Naive thymus-derived CD4-positive, alpha-beta T cell (primary cell): ENCODE measurements at regions of chr3 and their contacts with region 1.

Region 1: DNA sequence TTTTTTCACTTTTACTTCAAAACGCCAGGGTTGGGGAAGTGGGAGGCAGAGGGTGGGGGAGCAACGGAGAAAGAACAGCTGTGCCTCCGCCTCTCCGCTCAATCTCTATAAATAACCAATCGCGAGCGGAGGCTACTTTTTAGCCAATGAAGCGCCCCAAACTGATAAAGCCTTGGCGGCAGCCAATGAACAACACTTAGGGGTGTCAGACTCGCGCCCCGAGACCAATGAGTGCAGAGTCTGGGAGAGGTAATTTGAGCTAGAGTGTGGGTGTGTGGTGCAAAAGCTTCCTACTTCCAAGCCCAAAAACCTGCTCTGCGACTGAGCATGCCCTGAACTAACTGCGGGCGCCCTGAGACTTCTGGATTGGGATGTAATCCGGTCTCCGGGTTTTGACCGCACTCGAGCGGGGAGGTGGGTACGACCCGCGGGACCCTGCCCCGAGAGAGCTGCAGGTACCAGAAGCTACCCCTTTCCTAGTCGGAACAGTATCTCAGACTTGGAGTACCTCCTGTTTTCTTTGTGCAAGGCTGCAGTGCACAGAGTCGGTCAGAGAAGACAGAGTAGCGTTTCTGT is 800 bp upstream of the RAP2B start:
- DNase-seq: peak; percentile 66 to 95 (median 93)
- ATAC-seq: peak; percentile 85
- H3K4me3 ChIP-seq: peak overlapping the region; percentile 97
- H3K4me3 Mint-ChIP-seq: peak overlapping the region; percentile 95 to 100 (median 98)
- H3K27ac ChIP-seq: peak overlapping the region; percentile 81
- H3K27ac Mint-ChIP-seq: peak overlapping the region; percentile 89 to 98 (median 92)
- H3K4me1 ChIP-seq: peaks cover 7 to 22% of the 10 kb centered on the region in 2 donors
- H3K4me1 Mint-ChIP-seq: peaks cover 28 to 40% (median 34%) of the 10 kb centered on the region in 7 donors
- H3K27me3 ChIP-seq: no peaks in the 10 kb centered on the region
- H3K27me3 Mint-ChIP-seq: no peaks in the 10 kb centered on the region

Region 2: GRCh38 chr3:153090973-153091372 is 70.3 kb before region 1 on chr3:
- CTCF ChIA-PET with region 1: interaction called, 3 read pairs
- POLR2A ChIA-PET with region 1: no interaction called
- intact Hi-C with region 1: loop called (anchors 1 kb)
- DNase-seq: peak in 7 of 9 donors; percentile 11 to 73 (median 64)
- ATAC-seq: peak; percentile 70
- H3K4me3 ChIP-seq: no peak overlapping the region
- H3K4me3 Mint-ChIP-seq: peak overlapping the region; percentile 9 to 79 (median 51)
- H3K27ac ChIP-seq: no peak overlapping the region
- H3K27ac Mint-ChIP-seq: peak overlapping the region; percentile 40 to 91 (median 83)
- H3K4me1 ChIP-seq: peaks cover 5 to 15% of the 10 kb centered on the region in 2 donors
- H3K4me1 Mint-ChIP-seq: peaks cover 8 to 37% (median 26%) of the 10 kb centered on the region in 7 donors
- H3K27me3 ChIP-seq: no peaks in the 10 kb centered on the region
- H3K27me3 Mint-ChIP-seq: peaks cover 0 to 12% (median 0%) of the 10 kb centered on the region in 5 donors

Region 3: DNA sequence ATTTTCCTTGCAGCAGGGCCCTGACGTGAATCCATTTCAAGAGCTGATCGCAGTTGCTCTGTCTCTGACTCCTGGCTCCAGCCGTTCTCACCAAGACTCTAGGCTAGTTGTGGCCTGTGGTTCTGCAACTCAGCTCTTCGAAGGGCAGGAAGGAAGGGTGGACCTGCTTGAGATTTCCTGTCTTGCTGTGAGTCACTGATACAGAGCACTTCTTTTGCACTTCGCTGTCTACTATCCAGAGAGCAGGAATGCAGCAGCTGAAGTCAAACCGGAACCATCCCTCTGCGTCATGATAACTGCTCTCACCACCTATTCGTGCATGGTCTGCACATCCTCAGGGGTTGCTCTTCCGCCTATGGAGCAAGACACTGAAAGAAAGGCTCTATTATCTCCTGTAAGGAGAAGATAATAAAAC is 60.5 kb after region 1 on chr3:
- CTCF ChIA-PET with region 1: interaction called, 15 read pairs
- POLR2A ChIA-PET with region 1: interaction called, 55 read pairs
- intact Hi-C with region 1: loop called (anchors 1 kb)
- DNase-seq: peak; percentile 31 to 88 (median 82)
- ATAC-seq: peak; percentile 97
- H3K4me3 ChIP-seq: peak overlapping the region; percentile 39
- H3K4me3 Mint-ChIP-seq: peak overlapping the region; percentile 66 to 89 (median 84)
- H3K27ac ChIP-seq: peak overlapping the region; percentile 70
- H3K27ac Mint-ChIP-seq: peak overlapping the region in 8 of 9 donors; percentile 90 to 98 (median 96)
- H3K4me1 ChIP-seq: peaks cover 35 to 61% of the 10 kb centered on the region in 2 donors
- H3K4me1 Mint-ChIP-seq: peaks cover 6 to 73% (median 58%) of the 10 kb centered on the region in 7 donors
- H3K27me3 ChIP-seq: no peaks in the 10 kb centered on the region
- H3K27me3 Mint-ChIP-seq: no peaks in the 10 kb centered on the region

Region 4: DNA sequence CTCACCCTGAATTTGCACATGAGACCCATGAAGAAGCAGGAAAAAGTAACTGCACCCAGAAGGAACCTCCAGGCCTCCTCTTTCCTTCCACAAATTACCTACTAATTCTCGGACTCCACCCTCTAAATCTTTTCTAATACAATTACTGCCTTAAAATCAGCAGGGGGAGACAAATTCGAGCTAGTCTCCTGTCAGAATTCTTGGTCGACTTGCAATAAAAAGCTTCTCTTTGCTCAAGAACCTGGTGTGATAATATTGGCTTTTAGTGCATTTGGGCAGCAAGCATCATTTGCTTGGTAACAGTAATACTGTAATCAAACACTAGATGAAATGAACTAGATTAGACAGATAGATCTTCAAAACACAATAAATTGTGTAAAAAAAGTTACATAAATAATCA is 282.7 kb after region 1 on chr3:
- CTCF ChIA-PET with region 1: no interaction called
- POLR2A ChIA-PET with region 1: interaction called, 4 read pairs
- intact Hi-C with region 1: loop called in 1 of 2 experiments (anchors 1 kb)
- DNase-seq: peak in 5 of 9 donors; percentile 8 to 24 (median 12)
- ATAC-seq: no peak
- H3K4me3 ChIP-seq: no peak overlapping the region
- H3K4me3 Mint-ChIP-seq: no peak overlapping the region
- H3K27ac ChIP-seq: no peak overlapping the region
- H3K27ac Mint-ChIP-seq: peak overlapping the region in 1 of 9 donors; percentile 22
- H3K4me1 ChIP-seq: no peaks in the 10 kb centered on the region
- H3K4me1 Mint-ChIP-seq: peaks cover 5 to 26% (median 16%) of the 10 kb centered on the region in 7 donors
- H3K27me3 ChIP-seq: no peaks in the 10 kb centered on the region
- H3K27me3 Mint-ChIP-seq: no peaks in the 10 kb centered on the region

Region 5: DNA sequence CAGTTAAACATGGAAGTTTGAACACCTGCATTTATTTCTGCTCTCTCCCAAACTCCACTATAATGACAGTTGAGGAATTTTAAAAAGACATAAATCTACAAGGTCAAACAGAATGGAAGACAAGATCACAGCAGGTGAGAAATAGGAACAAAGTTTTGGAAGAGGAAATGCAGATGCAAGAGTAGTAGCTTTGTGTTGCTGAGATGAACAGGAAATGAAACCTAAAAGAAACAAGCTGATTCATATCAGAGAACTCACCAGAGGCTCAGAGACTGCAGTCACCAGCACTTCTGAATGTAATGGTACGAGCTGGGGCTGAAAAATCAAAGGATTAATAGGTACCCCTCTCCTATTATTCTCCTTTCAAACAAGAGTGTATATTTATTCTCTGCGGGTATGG is 460.7 kb after region 1 on chr3:
- CTCF ChIA-PET with region 1: interaction called, 4 read pairs
- POLR2A ChIA-PET with region 1: interaction called, 14 read pairs
- intact Hi-C with region 1: loop called (anchors 1 kb)
- DNase-seq: peak in 4 of 9 donors; percentile 17 to 35 (median 30)
- ATAC-seq: peak; percentile 64
- H3K4me3 ChIP-seq: peak overlapping the region; percentile 3
- H3K4me3 Mint-ChIP-seq: peak overlapping the region; percentile 33 to 83 (median 58)
- H3K27ac ChIP-seq: no peak overlapping the region
- H3K27ac Mint-ChIP-seq: peak overlapping the region; percentile 48 to 90 (median 78)
- H3K4me1 ChIP-seq: peaks cover 40% of the 10 kb centered on the region in 2 donors
- H3K4me1 Mint-ChIP-seq: peaks cover 21 to 63% (median 56%) of the 10 kb centered on the region in 7 donors
- H3K27me3 ChIP-seq: no peaks in the 10 kb centered on the region
- H3K27me3 Mint-ChIP-seq: no peaks in the 10 kb centered on the region

Region 6: GRCh38 chr3:153927107-153927506 is 765.9 kb after region 1 on chr3:
- CTCF ChIA-PET with region 1: no interaction called
- POLR2A ChIA-PET with region 1: no interaction called
- intact Hi-C with region 1: loop called in 1 of 2 experiments (anchors 10 kb)
- DNase-seq: no peak
- ATAC-seq: no peak
- H3K4me3 ChIP-seq: no peak overlapping the region
- H3K4me3 Mint-ChIP-seq: no peak overlapping the region
- H3K27ac ChIP-seq: no peak overlapping the region
- H3K27ac Mint-ChIP-seq: no peak overlapping the region
- H3K4me1 ChIP-seq: no peaks in the 10 kb centered on the region
- H3K4me1 Mint-ChIP-seq: no peaks in the 10 kb centered on the region
- H3K27me3 ChIP-seq: no peaks in the 10 kb centered on the region
- H3K27me3 Mint-ChIP-seq: peaks cover 0 to 21% (median 10%) of the 10 kb centered on the region in 5 donors

Region 7: GRCh38 chr3:154323891-154324738 is 1162.9 kb after region 1 on chr3 and contains the start of gene DHX36:
- CTCF ChIA-PET with region 1: no interaction called
- POLR2A ChIA-PET with region 1: no interaction called
- intact Hi-C with region 1: loop called (anchors 1 to 5 kb)
- DNase-seq: peak; percentile 73 to 92 (median 89)
- ATAC-seq: peak; percentile 94
- H3K4me3 ChIP-seq: peak within 1 kb of the TSS; percentile 70
- H3K4me3 Mint-ChIP-seq: peak within 1 kb of the TSS in 5 of 10 donors; percentile 92 to 96 (median 96)
- H3K27ac ChIP-seq: peak within 1 kb of the TSS; percentile 94
- H3K27ac Mint-ChIP-seq: peak within 1 kb of the TSS in 8 of 9 donors; percentile 96 to 100 (median 99)
- H3K4me1 ChIP-seq: peaks cover 38 to 43% of the 10 kb centered on the region in 2 donors
- H3K4me1 Mint-ChIP-seq: peaks cover 4 to 23% (median 20%) of the 10 kb centered on the region in 7 donors
- H3K27me3 ChIP-seq: no peaks in the 10 kb centered on the region
- H3K27me3 Mint-ChIP-seq: peaks cover 0 to under 1% (median 0%) of the 10 kb centered on the region in 5 donors
- total RNA-seq, gene DHX36: 73.4 to 101 (median 91.3) TPM